BJ (cell line): ENCODE measurements at regions of chr11 and their contacts with region 1.

Region 1: GRCh38 chr11:60831143-60831500 is 10.8 kb upstream of the CCDC86 start:
- DNase-seq: no peak
- H3K4me3 ChIP-seq: no peak overlapping the region
- H3K27me3 ChIP-seq: peaks cover 7% of the 10 kb centered on the region; the same call in 1 of the 2 replicates
- CTCF ChIP-seq: peak; percentile 90

Region 2: GRCh38 chr11:60841797-60842667 is 10.9 kb after region 1 on chr11 and contains the start of gene CCDC86:
- CTCF ChIA-PET with region 1: interaction called, 23 read pairs
- POLR2A ChIA-PET with region 1: no interaction called
- DNase-seq: peak; percentile 62
- H3K4me3 ChIP-seq: peak within 1 kb of the TSS; percentile 94
- H3K27me3 ChIP-seq: peaks cover 6% of the 10 kb centered on the region; the same call in 1 of the 2 replicates
- CTCF ChIP-seq: no peak
- polyA plus RNA-seq, gene CCDC86: 12.5 and 21.2 TPM in 2 replicates

Region 3: DNA sequence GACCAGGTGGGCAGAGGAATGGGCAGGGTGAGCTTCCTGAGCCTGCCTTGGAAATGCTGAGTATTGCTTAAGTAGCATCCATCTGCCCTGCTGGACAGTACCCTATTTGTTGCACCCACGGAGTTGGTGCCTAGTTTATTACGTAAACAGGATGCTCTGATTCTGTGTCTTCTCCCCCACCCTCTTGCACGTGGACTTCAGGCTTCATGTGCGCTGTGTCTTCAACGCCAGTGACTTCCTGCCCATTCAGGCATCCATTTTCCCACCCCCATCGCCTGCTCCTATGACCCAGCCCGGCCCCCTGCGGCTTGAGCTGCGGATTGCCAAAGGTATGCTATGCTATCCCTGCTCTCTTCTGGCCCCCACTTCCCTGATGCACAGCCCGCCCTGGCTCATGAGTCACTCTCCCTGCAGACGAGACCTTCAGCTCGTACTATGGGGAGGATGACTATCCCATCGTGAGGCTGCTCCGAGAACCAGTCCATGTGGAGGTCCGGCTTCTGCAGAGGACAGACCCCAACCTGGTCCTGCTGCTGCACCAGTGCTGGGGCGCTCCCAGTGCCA is 41.9 kb after region 1 on chr11:
- CTCF ChIA-PET with region 1: interaction called, 14 read pairs
- POLR2A ChIA-PET with region 1: no interaction called
- DNase-seq: peak; percentile 21
- H3K4me3 ChIP-seq: no peak overlapping the region
- H3K27me3 ChIP-seq: no peaks in the 10 kb centered on the region
- CTCF ChIP-seq: no peak

Region 4: GRCh38 chr11:61129639-61130523 is 298.8 kb after region 1 on chr11:
- CTCF ChIA-PET with region 1: interaction called, 12 read pairs
- POLR2A ChIA-PET with region 1: no interaction called
- DNase-seq: peak; percentile 77
- H3K4me3 ChIP-seq: peak overlapping the region; percentile 2; the same call in 1 of the 2 replicates
- H3K27me3 ChIP-seq: peaks cover 6% of the 10 kb centered on the region
- CTCF ChIP-seq: peak; percentile 100